ENCODE measurements at regions of chr1 and their contacts with region 1.

Region 1: GRCh38 chr1:233440951-233441401 is 113.5 kb downstream of the MAP3K21 start:
- DNase-seq: peak; percentile 47 to 72
- H3K4me3 ChIP-seq: no peak overlapping the region
- H3K27ac ChIP-seq: no peak overlapping the region
- H3K4me1 ChIP-seq: peaks cover 9% of the 10 kb centered on the region; the same call in 1 of the 2 replicates
- H3K27me3 ChIP-seq: no peaks in the 10 kb centered on the region
- CTCF ChIP-seq: peak; percentile 81

Region 2: DNA sequence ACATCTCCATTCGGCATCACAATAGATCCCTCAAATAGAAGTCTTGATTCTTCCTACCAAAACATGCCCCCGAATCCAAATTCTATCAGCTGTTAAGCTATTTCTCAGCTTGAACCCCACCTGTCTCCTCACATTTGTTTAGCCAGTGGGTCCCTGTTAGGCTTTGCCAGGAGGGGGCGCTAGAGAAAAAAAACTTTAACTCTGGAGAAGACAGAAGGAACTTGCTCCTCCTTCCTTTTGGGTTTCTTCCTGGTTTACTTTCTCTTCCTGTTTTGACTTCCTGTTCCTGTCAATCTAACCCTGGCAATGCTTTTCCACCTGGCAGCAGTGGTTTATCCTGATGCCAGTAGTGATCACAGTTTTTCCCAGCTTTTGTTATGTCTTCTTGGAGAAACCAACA is 77.4 kb after region 1 on chr1:
- CTCF ChIA-PET with region 1: no interaction called
- POLR2A ChIA-PET with region 1: no interaction called
- intact Hi-C with region 1: loop called (anchors 2 kb)
- DNase-seq: peak; percentile 25 to 50
- H3K4me3 ChIP-seq: no peak overlapping the region
- H3K27ac ChIP-seq: no peak overlapping the region
- H3K4me1 ChIP-seq: peaks cover 16% of the 10 kb centered on the region
- H3K27me3 ChIP-seq: no peaks in the 10 kb centered on the region
- CTCF ChIP-seq: peak; percentile 81

Region 3: DNA sequence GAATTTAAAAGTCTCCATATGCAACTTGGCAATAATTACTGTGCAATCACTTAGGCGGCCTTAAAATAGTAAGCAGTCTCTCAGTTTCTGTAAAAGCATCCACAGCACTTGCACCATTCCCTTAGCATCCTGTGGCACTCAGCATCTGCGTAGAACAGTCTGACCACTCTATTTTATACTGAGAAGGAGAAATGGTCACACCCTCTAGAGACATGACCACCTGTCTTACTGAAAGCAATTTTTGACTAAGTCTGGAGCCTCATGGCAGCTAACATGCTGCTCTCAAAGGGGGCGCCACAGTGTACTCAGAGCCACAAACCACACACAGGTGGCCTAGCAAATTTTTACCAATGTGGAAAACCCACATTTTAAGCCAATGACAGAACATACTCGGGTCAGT is 234.9 kb after region 1 on chr1:
- CTCF ChIA-PET with region 1: no interaction called
- POLR2A ChIA-PET with region 1: no interaction called
- intact Hi-C with region 1: loop called (anchors 1 kb)
- DNase-seq: no peak
- H3K4me3 ChIP-seq: no peak overlapping the region
- H3K27ac ChIP-seq: no peak overlapping the region
- H3K4me1 ChIP-seq: peaks cover 17% of the 10 kb centered on the region; the same call in 1 of the 2 replicates
- H3K27me3 ChIP-seq: no peaks in the 10 kb centered on the region
- CTCF ChIP-seq: no peak

Region 4: GRCh38 chr1:233790662-233791375 is 349.8 kb after region 1 on chr1:
- CTCF ChIA-PET with region 1: interaction called, 9 read pairs
- POLR2A ChIA-PET with region 1: interaction called, 7 read pairs
- intact Hi-C with region 1: loop called (anchors 1 kb)
- DNase-seq: peak; percentile 34 to 43
- H3K4me3 ChIP-seq: no peak overlapping the region
- H3K27ac ChIP-seq: no peak overlapping the region
- H3K4me1 ChIP-seq: 0 out of 2 replicates have a peak, but pooled peaks cover 7% of the 10 kb centered on the region
- H3K27me3 ChIP-seq: no peaks in the 10 kb centered on the region
- CTCF ChIP-seq: peak; percentile 97

Region 5: DNA sequence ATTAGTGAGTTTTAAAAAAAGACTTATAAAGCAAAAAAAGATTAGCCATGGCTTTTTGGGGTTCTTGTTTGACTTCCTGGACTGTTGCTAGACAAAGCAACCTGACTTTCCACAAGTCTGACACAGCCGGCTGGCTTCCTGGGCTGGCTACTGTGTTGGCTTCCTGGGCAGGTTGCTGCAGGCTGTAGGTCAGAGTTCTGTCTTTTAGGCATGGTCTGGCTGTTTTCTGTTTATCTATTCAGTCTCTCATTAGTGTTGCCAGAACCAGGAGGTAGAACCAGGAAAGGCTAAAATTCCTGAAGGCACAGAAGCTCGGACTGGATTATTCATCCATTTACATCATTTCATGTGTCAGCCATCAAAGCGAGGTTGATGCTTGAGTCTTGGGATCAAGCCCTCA is 374.9 kb after region 1 on chr1:
- CTCF ChIA-PET with region 1: no interaction called
- POLR2A ChIA-PET with region 1: no interaction called
- intact Hi-C with region 1: no loop called
- DNase-seq: peak; percentile 26 to 71
- H3K4me3 ChIP-seq: no peak overlapping the region
- H3K27ac ChIP-seq: no peak overlapping the region
- H3K4me1 ChIP-seq: peaks cover 8% of the 10 kb centered on the region
- H3K27me3 ChIP-seq: no peaks in the 10 kb centered on the region
- CTCF ChIP-seq: no peak

Region 6: GRCh38 chr1:234065794-234066447 is 624.9 kb after region 1 on chr1:
- CTCF ChIA-PET with region 1: interaction called, 5 read pairs
- POLR2A ChIA-PET with region 1: no interaction called
- intact Hi-C with region 1: loop called (anchors 1 kb)
- DNase-seq: peak in 1 of 2 experiments; percentile 75
- H3K4me3 ChIP-seq: no peak overlapping the region
- H3K27ac ChIP-seq: no peak overlapping the region
- H3K4me1 ChIP-seq: no peaks in the 10 kb centered on the region
- H3K27me3 ChIP-seq: no peaks in the 10 kb centered on the region
- CTCF ChIP-seq: peak; percentile 83

Measured in PC-9 (cell line).